H1 (cell line): ENCODE measurements at regions of chrX and their contacts with region 1.

Region 1: DNA sequence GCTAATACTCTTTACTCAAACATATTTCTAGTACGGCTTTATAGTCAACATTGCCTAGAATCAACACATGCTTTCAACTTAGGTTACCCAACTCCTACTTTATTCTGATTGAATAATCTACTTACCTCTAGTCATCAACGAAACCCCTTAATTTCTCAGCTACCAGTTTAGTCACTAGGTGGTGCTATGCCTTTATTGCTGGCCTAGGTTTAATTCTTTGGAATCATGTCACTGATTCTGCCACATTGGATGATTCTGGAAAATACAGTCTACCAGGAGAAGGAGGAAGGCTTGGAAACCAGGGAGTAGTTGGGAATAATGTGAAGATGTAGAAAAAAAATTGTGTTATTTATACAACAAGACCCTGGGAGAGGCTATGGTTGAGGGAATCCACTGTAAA is 167.7 kb downstream of the DCAF12L2 start:
- DNase-seq: no peak
- H3K4me3 ChIP-seq: no peak overlapping the region
- H3K27ac ChIP-seq: no peak overlapping the region
- H3K4me1 ChIP-seq: no peaks in the 10 kb centered on the region
- H3K27me3 ChIP-seq: no peaks in the 10 kb centered on the region
- CTCF ChIP-seq: peak in 2 of 3 experiments; percentile 42 to 60; a peak in 2 of 4 replicates
- EP300 ChIP-seq: no peak
- POLR2A ChIP-seq: no peak
- RAD21 ChIP-seq: peak; percentile 68 to 79

Region 2: DNA sequence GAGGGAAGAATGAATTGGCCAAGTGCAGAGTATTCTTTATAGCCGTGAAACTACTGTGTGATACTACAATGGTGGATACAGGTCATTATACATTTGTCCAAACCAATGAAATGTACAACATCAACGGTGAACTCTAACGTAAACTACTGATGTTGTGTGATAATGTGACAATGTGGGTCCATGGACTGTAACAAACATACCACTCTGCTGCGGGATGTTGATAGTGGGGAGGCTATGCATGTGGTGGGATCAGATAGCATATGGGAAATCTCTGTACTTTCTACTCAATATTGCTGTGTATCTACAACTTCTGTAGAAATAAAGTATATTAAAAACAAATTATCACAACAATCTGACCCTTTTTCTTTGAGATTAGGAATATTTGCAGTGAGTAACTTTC is 577.6 kb before region 1 on chrX:
- CTCF ChIA-PET with region 1: no interaction called
- POLR2A ChIA-PET with region 1: no interaction called
- DNase-seq: no peak
- H3K4me3 ChIP-seq: no peak overlapping the region
- H3K27ac ChIP-seq: no peak overlapping the region
- H3K4me1 ChIP-seq: no peaks in the 10 kb centered on the region
- H3K27me3 ChIP-seq: no peaks in the 10 kb centered on the region
- CTCF ChIP-seq: no peak
- EP300 ChIP-seq: no peak
- POLR2A ChIP-seq: no peak
- RAD21 ChIP-seq: no peak

Region 3: GRCh38 chrX:126030021-126030420 is 31.6 kb after region 1 on chrX:
- CTCF ChIA-PET with region 1: interaction called, 11 read pairs
- POLR2A ChIA-PET with region 1: no interaction called
- DNase-seq: no peak
- H3K4me3 ChIP-seq: no peak overlapping the region
- H3K27ac ChIP-seq: no peak overlapping the region
- H3K4me1 ChIP-seq: 0 out of 7 replicates have a peak, but pooled peaks cover 0 to 2% (median 0%) of the 10 kb centered on the region in 4 experiments
- H3K27me3 ChIP-seq: no peaks in the 10 kb centered on the region
- CTCF ChIP-seq: no peak
- EP300 ChIP-seq: no peak
- POLR2A ChIP-seq: no peak
- RAD21 ChIP-seq: no peak